H1 (cell line): ENCODE measurements at regions of chr10 and their contacts with region 1.

Region 1: DNA sequence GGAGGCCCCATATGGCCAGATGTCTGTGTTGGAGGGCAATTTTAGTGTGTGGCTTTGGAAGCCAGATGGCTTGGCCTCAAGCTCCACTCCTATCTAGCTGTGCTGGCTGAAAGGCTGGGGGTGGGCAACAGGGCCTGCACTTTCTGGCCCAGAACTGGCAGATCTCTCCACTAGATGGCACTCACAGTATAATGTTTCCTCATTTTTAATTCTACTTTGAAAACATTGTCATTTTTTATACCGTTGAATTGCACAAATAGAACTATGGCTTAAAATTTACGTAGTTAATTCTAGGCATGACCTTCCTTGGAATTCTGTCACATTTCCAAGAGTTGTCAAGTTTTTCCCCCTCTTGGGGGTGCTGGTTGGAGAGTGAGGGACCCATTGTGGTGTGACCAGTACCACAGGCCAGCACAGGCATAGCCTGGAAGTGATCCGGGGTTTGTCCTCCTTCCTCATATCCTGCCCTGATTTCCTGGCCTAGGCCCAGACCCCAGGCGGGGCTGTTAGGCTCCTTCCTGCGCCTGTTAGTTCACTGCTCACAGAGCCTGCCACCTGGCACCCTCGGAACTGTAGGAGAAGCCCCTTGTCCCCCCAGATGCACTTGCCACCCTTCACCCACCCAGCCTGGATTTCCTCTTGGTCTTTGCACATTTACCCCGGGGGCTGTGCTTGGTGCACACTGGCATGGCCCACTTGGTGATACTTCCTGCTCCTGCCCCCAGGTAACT is 52.8 kb downstream of the ARHGAP22 start:
- DNase-seq: peak in 1 of 2 experiments; percentile 63
- H3K4me3 ChIP-seq: no peak overlapping the region
- H3K27ac ChIP-seq: no peak overlapping the region
- H3K4me1 ChIP-seq: peaks cover 0 to 8% (median 4%) of the 10 kb centered on the region in 4 experiments; a peak in 4 of 7 replicates
- H3K27me3 ChIP-seq: no peaks in the 10 kb centered on the region; a peak in 1 of 7 replicates
- CTCF ChIP-seq: peak; percentile 45 to 70 (median 68)
- EP300 ChIP-seq: no peak
- POLR2A ChIP-seq: no peak
- RAD21 ChIP-seq: peak; percentile 69 to 72

Region 2: GRCh38 chr10:48533951-48534720 is 17.9 kb before region 1 on chr10:
- CTCF ChIA-PET with region 1: interaction called, 127 read pairs
- POLR2A ChIA-PET with region 1: interaction called, 3 read pairs
- DNase-seq: no peak
- H3K4me3 ChIP-seq: peak overlapping the region in 1 of 4 experiments; percentile 1; a peak in 1 of 8 replicates
- H3K27ac ChIP-seq: peak overlapping the region; percentile 17; the same call in 1 of the 2 replicates
- H3K4me1 ChIP-seq: peaks cover 0 to 31% (median 22%) of the 10 kb centered on the region in 4 experiments; a peak in 6 of 7 replicates
- H3K27me3 ChIP-seq: no peaks in the 10 kb centered on the region
- CTCF ChIP-seq: no peak
- EP300 ChIP-seq: no peak
- POLR2A ChIP-seq: no peak
- RAD21 ChIP-seq: no peak

Region 3: GRCh38 chr10:48589266-48589665 is 37.2 kb after region 1 on chr10:
- CTCF ChIA-PET with region 1: interaction called, 17 read pairs
- POLR2A ChIA-PET with region 1: no interaction called
- DNase-seq: no peak
- H3K4me3 ChIP-seq: no peak overlapping the region
- H3K27ac ChIP-seq: no peak overlapping the region
- H3K4me1 ChIP-seq: peaks cover 0 to 4% (median 3%) of the 10 kb centered on the region in 4 experiments; a peak in 5 of 7 replicates
- H3K27me3 ChIP-seq: no peaks in the 10 kb centered on the region
- CTCF ChIP-seq: no peak
- EP300 ChIP-seq: no peak
- POLR2A ChIP-seq: no peak
- RAD21 ChIP-seq: no peak

Region 4: GRCh38 chr10:48608279-48608681 is 56.3 kb after region 1 on chr10:
- CTCF ChIA-PET with region 1: interaction called, 59 read pairs
- POLR2A ChIA-PET with region 1: no interaction called
- DNase-seq: peak; percentile 43 to 76
- H3K4me3 ChIP-seq: no peak overlapping the region
- H3K27ac ChIP-seq: no peak overlapping the region
- H3K4me1 ChIP-seq: peaks cover 0 to 17% (median 9%) of the 10 kb centered on the region in 4 experiments; a peak in 6 of 7 replicates
- H3K27me3 ChIP-seq: peaks cover 0 to 21% (median 15%) of the 10 kb centered on the region in 4 experiments; a peak in 6 of 7 replicates
- CTCF ChIP-seq: peak; percentile 80 to 93 (median 85)
- EP300 ChIP-seq: no peak
- POLR2A ChIP-seq: no peak
- RAD21 ChIP-seq: peak; percentile 49 to 70

Region 5: DNA sequence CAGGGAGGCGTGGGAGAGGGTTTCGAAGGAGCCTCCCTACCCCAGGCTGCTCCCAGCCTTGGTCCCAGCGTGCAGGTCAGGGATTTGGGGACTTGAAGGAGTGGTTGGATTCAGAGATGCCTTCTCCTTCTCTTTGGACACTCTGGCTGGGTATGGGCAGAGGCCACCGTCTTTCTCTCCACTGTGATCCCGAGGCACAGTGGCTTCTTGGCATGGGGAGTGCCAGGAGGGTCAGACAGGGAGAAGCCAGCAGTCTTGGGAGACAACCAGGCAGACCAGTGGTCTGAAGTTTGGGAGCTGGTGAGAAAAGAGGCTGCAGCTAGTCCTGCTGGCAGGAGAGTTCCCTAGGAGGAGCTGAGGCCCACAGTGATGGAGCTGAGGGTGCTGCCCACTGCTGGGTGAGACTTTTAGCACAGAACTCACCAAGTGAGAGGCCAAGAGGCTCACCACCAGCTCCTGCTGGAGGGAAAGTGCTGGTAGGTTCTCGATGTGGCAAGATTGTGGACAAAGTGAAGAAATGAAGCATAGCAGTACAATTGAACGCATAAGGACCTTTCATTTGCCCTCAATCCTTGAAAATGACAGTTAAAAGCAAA is 97.4 kb after region 1 on chr10:
- CTCF ChIA-PET with region 1: interaction called, 105 read pairs
- POLR2A ChIA-PET with region 1: no interaction called
- DNase-seq: peak in 1 of 2 experiments; percentile 31
- H3K4me3 ChIP-seq: no peak overlapping the region
- H3K27ac ChIP-seq: no peak overlapping the region
- H3K4me1 ChIP-seq: no peaks in the 10 kb centered on the region
- H3K27me3 ChIP-seq: 0 out of 7 replicates have a peak, but pooled peaks cover 0 to 3% (median 0%) of the 10 kb centered on the region in 4 experiments
- CTCF ChIP-seq: peak in 2 of 3 experiments; percentile 6 to 15; a peak in 2 of 4 replicates
- EP300 ChIP-seq: no peak
- POLR2A ChIP-seq: no peak
- RAD21 ChIP-seq: no peak